Mammary epithelial cell (primary cell): ENCODE measurements at regions of chr5 and their contacts with region 1.

Region 1: DNA sequence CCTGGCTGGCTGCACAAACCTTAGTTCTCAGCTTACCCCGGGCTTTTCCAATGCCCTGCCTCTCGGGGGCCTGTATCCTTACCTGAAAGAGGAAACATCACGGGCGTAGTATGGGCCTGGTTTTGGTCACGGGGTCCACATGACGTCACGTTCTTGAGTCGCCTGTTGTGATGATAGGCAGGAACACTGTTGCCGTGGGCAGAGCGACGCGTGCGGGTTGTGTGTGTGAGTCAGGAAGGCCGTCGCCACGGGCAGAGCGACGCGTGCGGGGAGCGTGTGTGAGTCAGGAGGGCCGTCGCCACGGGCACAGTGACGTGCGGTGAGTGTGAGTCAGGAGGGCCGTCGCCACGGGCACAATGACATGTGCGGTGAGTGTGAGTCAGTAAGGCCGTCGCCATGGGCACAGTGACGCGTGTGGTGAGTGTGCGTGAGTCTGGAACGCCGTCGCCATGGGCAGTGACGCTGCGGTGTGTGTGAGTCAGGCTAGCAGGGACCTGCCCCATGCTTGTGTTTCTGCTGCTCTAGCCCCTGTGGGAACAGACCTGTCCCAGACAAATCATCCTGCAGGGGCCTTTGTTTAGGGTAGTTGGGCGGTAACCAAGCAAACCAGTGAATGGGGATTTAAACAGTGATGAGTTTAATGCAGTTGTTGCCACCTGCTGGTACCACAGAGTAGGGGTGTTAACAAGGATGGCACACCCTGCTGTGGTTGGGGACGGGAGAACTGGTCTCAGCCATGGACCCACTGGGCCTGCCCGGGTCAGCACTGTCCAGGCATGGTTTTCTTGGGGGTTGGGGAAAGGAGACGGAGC is 19.8 kb downstream of the TRIP13 start:
- DNase-seq: peak; percentile 99
- H3K4me3 ChIP-seq: no peak overlapping the region
- H3K27ac ChIP-seq: peak overlapping the region; percentile 98
- H3K4me1 ChIP-seq: peaks cover 32% of the 10 kb centered on the region
- H3K27me3 ChIP-seq: no peaks in the 10 kb centered on the region
- CTCF ChIP-seq: peak; percentile 34 to 58

Region 2: GRCh38 chr5:458547-459353 is 453.7 kb before region 1 on chr5:
- CTCF ChIA-PET with region 1: no interaction called
- dilution Hi-C with region 1: loop called (anchors 5 kb)
- in situ Hi-C with region 1: no loop called
- intact Hi-C with region 1: no loop called
- DNase-seq: peak; percentile 94
- H3K4me3 ChIP-seq: no peak overlapping the region
- H3K27ac ChIP-seq: peak overlapping the region; percentile 91
- H3K4me1 ChIP-seq: peaks cover 25% of the 10 kb centered on the region
- H3K27me3 ChIP-seq: no peaks in the 10 kb centered on the region
- CTCF ChIP-seq: no peak

Region 3: DNA sequence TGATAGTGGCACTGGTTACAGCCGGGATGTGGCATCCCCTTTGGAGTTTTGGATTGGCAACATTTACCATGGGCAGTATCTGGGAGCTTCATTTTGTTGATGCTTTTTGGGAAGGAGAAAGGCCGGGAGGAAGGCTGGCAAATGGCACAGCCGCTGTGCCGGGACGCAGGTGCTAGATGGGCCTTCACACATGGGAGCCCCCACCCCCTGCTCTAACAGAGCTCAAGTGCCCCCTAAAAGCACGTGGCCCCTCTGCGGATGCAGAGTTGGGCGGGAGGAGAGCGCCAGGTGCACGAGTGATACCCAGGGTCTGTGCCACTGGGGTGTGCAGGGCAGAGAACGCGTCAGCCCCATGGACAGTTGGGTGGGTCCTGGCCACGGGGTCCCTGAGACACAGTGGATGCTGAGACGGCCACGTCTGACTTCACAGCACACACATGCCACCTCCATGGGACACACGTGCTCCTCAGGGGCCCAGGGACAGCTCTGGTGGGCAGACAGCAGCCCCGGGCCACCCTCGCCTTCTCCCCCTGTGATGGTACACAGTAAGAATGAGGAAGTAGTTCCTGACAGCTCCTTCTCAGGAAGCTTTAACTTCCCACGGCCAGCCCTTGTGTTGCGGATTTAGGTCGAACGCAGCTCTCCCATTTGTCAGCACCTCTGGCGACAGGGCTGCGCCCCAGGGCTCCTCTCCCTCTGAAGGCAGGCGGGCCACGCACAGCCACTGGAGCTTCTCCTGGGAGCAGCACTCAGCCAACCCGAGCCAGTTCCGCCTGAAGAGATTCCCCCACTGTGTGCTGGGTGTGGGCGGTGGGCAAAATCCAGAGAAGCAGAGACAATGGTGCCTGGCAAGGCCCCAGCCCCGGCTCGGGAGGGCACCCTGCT is 399.0 kb before region 1 on chr5:
- CTCF ChIA-PET with region 1: no interaction called
- dilution Hi-C with region 1: loop called (anchors 5 kb)
- in situ Hi-C with region 1: no loop called
- intact Hi-C with region 1: no loop called
- DNase-seq: no peak
- H3K4me3 ChIP-seq: no peak overlapping the region
- H3K27ac ChIP-seq: no peak overlapping the region
- H3K4me1 ChIP-seq: peaks cover 7% of the 10 kb centered on the region
- H3K27me3 ChIP-seq: peaks cover 4% of the 10 kb centered on the region
- CTCF ChIP-seq: no peak

Region 4: GRCh38 chr5:867300-867870 is 45.1 kb before region 1 on chr5:
- CTCF ChIA-PET with region 1: no interaction called
- dilution Hi-C with region 1: loop called (anchors 5 kb)
- in situ Hi-C with region 1: no loop called
- intact Hi-C with region 1: no loop called
- DNase-seq: no peak
- H3K4me3 ChIP-seq: no peak overlapping the region
- H3K27ac ChIP-seq: no peak overlapping the region
- H3K4me1 ChIP-seq: peaks cover 11% of the 10 kb centered on the region
- H3K27me3 ChIP-seq: no peaks in the 10 kb centered on the region
- CTCF ChIP-seq: no peak

Region 5: GRCh38 chr5:1174122-1174936 is 261.8 kb after region 1 on chr5:
- CTCF ChIA-PET with region 1: no interaction called
- dilution Hi-C with region 1: no loop called
- in situ Hi-C with region 1: loop called in 1 of 2 experiments (anchors 10 kb)
- intact Hi-C with region 1: no loop called
- DNase-seq: peak; percentile 57
- H3K4me3 ChIP-seq: no peak overlapping the region
- H3K27ac ChIP-seq: no peak overlapping the region
- H3K4me1 ChIP-seq: no peaks in the 10 kb centered on the region
- H3K27me3 ChIP-seq: no peaks in the 10 kb centered on the region
- CTCF ChIP-seq: peak; percentile 79 to 88